PC-9 (cell line): ENCODE measurements at regions of chr19 and their contacts with region 1.

Region 1: DNA sequence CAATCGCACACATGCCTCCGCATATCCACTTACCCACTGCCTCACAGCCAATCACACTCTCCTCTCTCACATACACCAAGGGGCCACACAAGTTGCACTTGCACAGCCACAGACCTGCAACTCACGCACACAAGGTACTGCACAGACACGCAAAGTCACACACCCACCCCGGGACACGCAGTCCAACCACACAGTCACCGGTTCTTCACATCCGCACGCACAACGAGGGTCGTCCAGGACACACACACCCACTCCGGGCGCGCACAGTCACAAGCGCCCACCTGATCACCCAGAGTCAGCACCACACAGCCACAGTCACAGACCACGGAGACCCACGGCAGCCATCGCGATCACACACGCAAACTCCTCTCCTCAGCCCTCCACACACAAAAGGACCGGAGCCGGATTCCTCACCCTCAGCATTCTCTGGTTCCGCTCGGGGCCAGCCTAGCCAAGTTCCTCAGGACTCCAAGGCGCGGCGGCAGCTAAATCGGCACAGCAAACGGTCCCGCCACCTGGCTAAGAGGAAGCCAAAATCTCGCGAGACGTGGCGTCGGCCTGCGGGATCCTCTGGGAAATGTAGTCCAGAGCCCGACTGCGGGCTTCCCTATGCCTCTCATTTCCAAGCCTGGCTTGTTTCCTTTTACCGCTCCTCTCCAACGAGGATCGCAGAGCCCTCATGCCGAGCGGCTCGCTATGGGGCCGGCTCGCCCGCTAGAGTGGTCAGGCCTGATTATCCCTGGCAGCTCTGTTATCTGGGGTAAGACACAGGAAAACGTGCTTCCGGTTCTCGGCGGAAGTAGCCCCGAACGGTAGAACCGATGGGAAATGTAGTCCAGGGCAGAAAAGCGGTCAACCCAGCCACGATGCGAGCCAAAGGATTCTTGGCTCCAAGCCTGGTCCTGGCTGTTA is at the start of gene ZNF850:
- DNase-seq: peak; percentile 86 to 92
- H3K4me3 ChIP-seq: peak within 1 kb of the TSS; percentile 81
- H3K27ac ChIP-seq: no peak within 1 kb of the TSS
- H3K4me1 ChIP-seq: no peaks in the 10 kb centered on the region
- H3K27me3 ChIP-seq: no peaks in the 10 kb centered on the region
- CTCF ChIP-seq: no peak
- total RNA-seq, gene ZNF850: 4.0 and 6.0 TPM in 2 replicates

Region 2: GRCh38 chr19:36214386-36215275 is 557.9 kb before region 1 on chr19 and contains the starts of genes ZNF146 and ZNF565:
- CTCF ChIA-PET with region 1: interaction called, 3 read pairs
- POLR2A ChIA-PET with region 1: interaction called, 3 read pairs
- intact Hi-C with region 1: loop called (anchors 10 kb)
- DNase-seq: peak; percentile 95
- H3K4me3 ChIP-seq: peak within 1 kb of the TSS; percentile 70
- H3K27ac ChIP-seq: peak within 1 kb of the TSS; percentile 57
- H3K4me1 ChIP-seq: peaks cover 5% of the 10 kb centered on the region
- H3K27me3 ChIP-seq: no peaks in the 10 kb centered on the region
- CTCF ChIP-seq: no peak
- total RNA-seq, gene ZNF146: 53.1 and 68.0 TPM in 2 replicates
- total RNA-seq, gene ZNF565: 3.3 and 4.3 TPM in 2 replicates

Region 3: DNA sequence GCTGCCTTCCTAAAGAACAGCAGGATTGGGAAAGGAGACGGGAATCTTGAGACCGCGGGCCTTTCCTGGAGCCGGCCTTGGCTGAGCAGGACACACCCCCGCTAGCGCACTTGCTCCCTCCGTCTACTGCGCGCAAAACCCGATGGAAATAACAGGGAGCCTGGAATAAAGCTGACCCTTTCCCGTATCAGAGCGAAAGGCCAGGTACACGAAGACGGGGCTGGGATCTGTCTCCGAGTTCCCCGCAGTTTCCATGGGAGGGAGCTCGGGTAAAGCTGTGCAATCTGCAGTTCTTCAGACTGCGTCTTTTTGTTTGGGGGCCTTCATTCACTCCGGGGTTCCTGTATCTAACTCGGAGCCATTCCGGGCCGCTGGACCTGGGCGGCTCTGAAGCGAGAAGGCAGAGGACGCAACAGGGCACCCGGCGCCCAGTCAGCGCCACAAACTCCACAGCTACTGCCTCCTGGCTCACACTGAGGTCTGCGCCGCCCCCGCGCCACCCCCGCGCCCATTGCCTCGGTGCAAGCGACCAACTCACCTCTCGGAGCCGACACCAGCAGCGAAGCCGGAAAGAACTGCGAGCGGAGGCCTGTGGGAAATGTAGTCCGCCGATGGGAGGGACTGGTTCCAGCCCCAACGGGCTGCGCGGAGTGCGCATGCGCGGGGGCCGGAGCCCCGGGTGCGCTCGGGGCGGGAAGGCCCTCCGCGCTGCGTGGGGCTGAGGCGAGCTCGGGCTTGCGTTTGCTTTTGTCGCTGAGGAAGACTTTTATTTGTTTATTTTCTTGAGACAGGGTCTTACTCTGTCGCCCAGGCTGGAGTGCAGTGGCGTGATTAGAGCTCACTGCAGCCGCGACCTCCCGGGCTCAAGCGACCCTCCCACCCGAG is 393.7 kb before region 1 on chr19 and contains the start of gene ZFP14:
- CTCF ChIA-PET with region 1: no interaction called
- POLR2A ChIA-PET with region 1: no interaction called
- intact Hi-C with region 1: loop called (anchors 5 kb)
- DNase-seq: peak; percentile 83 to 93
- H3K4me3 ChIP-seq: peak within 1 kb of the TSS; percentile 83
- H3K27ac ChIP-seq: peak within 1 kb of the TSS; percentile 41
- H3K4me1 ChIP-seq: peaks cover 7% of the 10 kb centered on the region
- H3K27me3 ChIP-seq: no peaks in the 10 kb centered on the region
- CTCF ChIP-seq: peak; percentile 36; the same call in 1 of the 2 replicates
- total RNA-seq, gene ZFP14: 5.9 and 6.7 TPM in 2 replicates

Region 4: DNA sequence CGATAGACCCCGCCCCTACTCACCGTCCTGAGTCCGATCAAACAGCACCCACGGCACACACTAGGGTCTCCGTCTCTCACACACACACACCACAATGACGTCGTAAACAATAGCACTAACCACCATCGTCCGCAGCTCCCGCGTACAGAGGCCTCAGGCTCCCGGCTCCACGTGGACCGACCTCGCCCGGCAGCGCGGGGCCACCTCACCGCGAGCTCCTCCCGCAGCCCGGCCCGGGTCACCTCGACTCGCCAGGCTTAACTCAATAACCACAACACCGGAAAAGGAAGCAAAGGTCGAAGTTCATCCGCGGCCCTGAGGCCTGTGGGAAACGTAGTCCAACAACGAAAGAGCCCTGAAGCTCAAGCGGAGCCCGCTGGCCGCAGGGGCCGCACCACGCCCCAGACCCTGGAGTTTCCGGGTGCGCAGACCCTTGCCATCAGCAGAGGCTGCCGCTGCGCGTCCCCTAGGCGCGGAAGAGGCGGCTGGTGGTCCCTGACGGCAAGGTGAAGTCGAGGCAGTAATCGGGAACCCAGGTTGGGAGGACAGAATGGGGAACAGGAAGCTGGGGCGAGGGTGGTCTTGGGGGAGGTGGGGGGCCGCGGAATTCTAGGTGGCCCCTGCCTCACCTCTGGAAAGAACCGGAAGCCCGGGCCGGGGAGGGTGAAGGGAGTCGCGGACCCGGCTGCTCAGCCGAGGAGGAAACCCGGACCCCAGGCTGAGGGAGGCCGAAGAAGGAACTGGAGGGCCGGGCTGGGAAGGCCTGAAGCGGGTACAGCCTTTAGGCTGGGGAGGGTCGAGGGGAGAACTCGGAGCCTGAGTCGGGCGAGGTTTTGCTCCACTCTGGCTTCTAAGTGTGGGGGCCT is 199.3 kb before region 1 on chr19 and contains the start of gene ZNF529:
- CTCF ChIA-PET with region 1: no interaction called
- POLR2A ChIA-PET with region 1: interaction called, 10 read pairs
- intact Hi-C with region 1: no loop called
- DNase-seq: peak; percentile 84 to 87
- H3K4me3 ChIP-seq: peak within 1 kb of the TSS; percentile 90
- H3K27ac ChIP-seq: peak within 1 kb of the TSS; percentile 55
- H3K4me1 ChIP-seq: peaks cover 6% of the 10 kb centered on the region; the same call in 1 of the 2 replicates
- H3K27me3 ChIP-seq: no peaks in the 10 kb centered on the region
- CTCF ChIP-seq: no peak
- total RNA-seq, gene ZNF529: 4.0 and 4.2 TPM in 2 replicates

Region 5: DNA sequence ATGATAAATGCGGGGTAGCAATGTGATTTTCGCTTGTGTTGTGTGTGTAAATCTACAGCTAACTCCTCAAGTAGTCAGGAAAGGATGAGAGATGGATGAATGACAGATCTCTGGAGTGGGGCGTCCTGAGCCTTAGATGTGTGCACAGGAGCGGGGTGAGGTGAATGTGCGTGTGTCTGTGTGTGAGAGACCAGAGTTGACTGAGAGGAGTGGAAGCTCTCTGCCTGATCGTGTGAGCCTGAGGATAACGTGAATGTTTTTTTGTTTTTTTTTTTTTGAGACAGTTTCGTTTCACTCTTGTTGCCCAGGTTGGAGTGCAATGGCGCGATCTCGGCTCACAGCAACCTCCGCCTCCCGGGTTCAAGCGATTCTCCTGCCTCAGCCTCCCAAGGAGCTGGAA is 106.7 kb before region 1 on chr19:
- CTCF ChIA-PET with region 1: no interaction called
- POLR2A ChIA-PET with region 1: interaction called, 4 read pairs
- intact Hi-C with region 1: loop called (anchors 5 kb)
- DNase-seq: no peak
- H3K4me3 ChIP-seq: peak overlapping the region; percentile 79
- H3K27ac ChIP-seq: no peak overlapping the region
- H3K4me1 ChIP-seq: 0 out of 2 replicates have a peak, but pooled peaks cover 5% of the 10 kb centered on the region
- H3K27me3 ChIP-seq: no peaks in the 10 kb centered on the region
- CTCF ChIP-seq: no peak

Region 6: GRCh38 chr19:36687214-36688056 is 85.1 kb before region 1 on chr19 and contains the start of gene ZNF567:
- CTCF ChIA-PET with region 1: no interaction called
- POLR2A ChIA-PET with region 1: no interaction called
- intact Hi-C with region 1: loop called (anchors 1 kb)
- DNase-seq: peak; percentile 89 to 98
- H3K4me3 ChIP-seq: peak within 1 kb of the TSS; percentile 82
- H3K27ac ChIP-seq: peak within 1 kb of the TSS; percentile 38
- H3K4me1 ChIP-seq: no peaks in the 10 kb centered on the region; the same call in 1 of the 2 replicates
- H3K27me3 ChIP-seq: no peaks in the 10 kb centered on the region
- CTCF ChIP-seq: no peak
- total RNA-seq, gene ZNF567: 7.0 and 7.9 TPM in 2 replicates

Region 7: GRCh38 chr19:36915992-36916830 is 143.6 kb after region 1 on chr19 and contains the starts of genes ZNF568 and ZNF829:
- CTCF ChIA-PET with region 1: no interaction called
- POLR2A ChIA-PET with region 1: no interaction called
- intact Hi-C with region 1: loop called (anchors 1 kb)
- DNase-seq: peak; percentile 77 to 86
- H3K4me3 ChIP-seq: peak within 1 kb of the TSS; percentile 80
- H3K27ac ChIP-seq: peak within 1 kb of the TSS; percentile 53
- H3K4me1 ChIP-seq: peaks cover 9% of the 10 kb centered on the region
- H3K27me3 ChIP-seq: no peaks in the 10 kb centered on the region
- CTCF ChIP-seq: peak; percentile 65
- total RNA-seq, gene ZNF568: 5.8 and 6.4 TPM in 2 replicates
- total RNA-seq, gene ZNF829: 2.6 and 3.1 TPM in 2 replicates